Calu3 (cell line): ENCODE measurements at regions of chr3 and their contacts with region 1.

Region 1: GRCh38 chr3:136075218-136075808 is 109.8 kb downstream of the PPP2R3A start:
- DNase-seq: peak; percentile 81
- H3K4me3 Mint-ChIP-seq: no peak overlapping the region
- H3K27ac Mint-ChIP-seq: no peak overlapping the region
- H3K4me1 Mint-ChIP-seq: peaks cover 8% of the 10 kb centered on the region
- H3K27me3 Mint-ChIP-seq: no peaks in the 10 kb centered on the region
- CTCF ChIP-seq: peak; percentile 85

Region 2: GRCh38 chr3:136022529-136023263 is 52.6 kb before region 1 on chr3:
- CTCF ChIA-PET with region 1: no interaction called
- intact Hi-C with region 1: no loop called
- DNase-seq: no peak
- H3K4me3 Mint-ChIP-seq: no peak overlapping the region
- H3K27ac Mint-ChIP-seq: no peak overlapping the region
- H3K4me1 Mint-ChIP-seq: peaks cover 10% of the 10 kb centered on the region
- H3K27me3 Mint-ChIP-seq: no peaks in the 10 kb centered on the region
- CTCF ChIP-seq: no peak

Region 3: DNA sequence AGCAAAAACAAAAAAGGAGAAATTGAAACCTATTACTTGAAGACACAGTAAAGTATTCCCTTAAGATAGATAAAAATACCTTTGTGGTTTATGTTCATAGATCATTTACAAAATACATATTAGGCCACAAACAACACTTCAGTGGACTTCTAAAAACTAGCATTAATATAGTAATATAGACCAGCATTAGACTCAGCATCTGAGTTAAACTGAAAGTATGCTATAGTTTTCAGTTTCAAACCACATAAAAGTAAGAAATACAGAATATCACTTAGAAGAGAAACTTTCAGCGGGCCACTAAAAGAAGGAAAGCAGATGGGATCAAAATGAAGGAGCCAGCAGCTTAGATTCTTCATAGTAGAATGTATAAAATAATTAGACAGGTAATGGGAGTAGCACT is 34.2 kb after region 1 on chr3:
- CTCF ChIA-PET with region 1: no interaction called
- intact Hi-C with region 1: no loop called
- DNase-seq: no peak
- H3K4me3 Mint-ChIP-seq: no peak overlapping the region
- H3K27ac Mint-ChIP-seq: no peak overlapping the region
- H3K4me1 Mint-ChIP-seq: no peaks in the 10 kb centered on the region
- H3K27me3 Mint-ChIP-seq: no peaks in the 10 kb centered on the region
- CTCF ChIP-seq: no peak

Region 4: DNA sequence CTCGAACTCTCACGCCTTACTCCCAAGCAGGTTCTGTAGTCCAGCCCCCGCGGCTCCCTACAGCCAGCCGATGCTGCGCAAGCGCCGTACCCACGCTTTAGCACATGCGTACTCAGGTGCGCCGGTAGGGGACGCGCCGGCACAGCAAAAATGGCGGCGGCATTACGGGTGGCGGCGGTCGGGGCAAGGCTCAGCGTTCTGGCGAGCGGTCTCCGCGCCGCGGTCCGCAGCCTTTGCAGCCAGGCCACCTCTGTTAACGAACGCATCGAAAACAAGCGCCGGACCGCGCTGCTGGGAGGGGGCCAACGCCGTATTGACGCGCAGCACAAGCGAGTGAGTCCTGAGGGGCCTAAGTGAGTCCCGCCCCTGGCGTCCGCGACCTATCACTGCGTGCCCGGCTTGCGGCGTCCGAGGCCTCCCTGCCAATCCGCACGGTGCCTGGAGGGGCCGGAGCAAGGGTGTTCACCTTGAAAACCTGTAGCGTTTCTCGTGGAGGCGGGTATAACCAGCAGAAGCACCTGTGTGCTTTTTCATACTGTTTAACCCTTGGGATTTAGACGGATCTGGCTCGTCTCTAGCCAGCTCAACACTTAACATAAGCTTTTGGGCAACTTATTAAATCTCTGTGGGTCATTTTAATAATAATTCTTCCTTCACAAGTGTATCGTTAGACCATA is 175.1 kb after region 1 on chr3 and contains the start of gene PCCB:
- CTCF ChIA-PET with region 1: interaction called, 4 read pairs
- intact Hi-C with region 1: loop called (anchors 1 kb)
- DNase-seq: peak; percentile 99
- H3K4me3 Mint-ChIP-seq: peak within 1 kb of the TSS; percentile 89
- H3K27ac Mint-ChIP-seq: peak within 1 kb of the TSS; percentile 96
- H3K4me1 Mint-ChIP-seq: peaks cover 26% of the 10 kb centered on the region
- H3K27me3 Mint-ChIP-seq: no peaks in the 10 kb centered on the region
- CTCF ChIP-seq: peak; percentile 94
- total RNA-seq, gene PCCB: 52.3 and 63.5 TPM in 2 replicates

Region 5: GRCh38 chr3:136305878-136306277 is 230.6 kb after region 1 on chr3:
- CTCF ChIA-PET with region 1: no interaction called
- intact Hi-C with region 1: loop called (anchors 5 kb)
- DNase-seq: peak; percentile 33
- H3K4me3 Mint-ChIP-seq: no peak overlapping the region
- H3K27ac Mint-ChIP-seq: no peak overlapping the region
- H3K4me1 Mint-ChIP-seq: no peaks in the 10 kb centered on the region
- H3K27me3 Mint-ChIP-seq: no peaks in the 10 kb centered on the region
- CTCF ChIP-seq: peak; percentile 65

Region 6: GRCh38 chr3:136390574-136390973 is 315.3 kb after region 1 on chr3:
- CTCF ChIA-PET with region 1: interaction called, 13 read pairs
- intact Hi-C with region 1: loop called (anchors 2 kb)
- DNase-seq: no peak
- H3K4me3 Mint-ChIP-seq: no peak overlapping the region
- H3K27ac Mint-ChIP-seq: no peak overlapping the region
- H3K4me1 Mint-ChIP-seq: no peaks in the 10 kb centered on the region
- H3K27me3 Mint-ChIP-seq: no peaks in the 10 kb centered on the region
- CTCF ChIP-seq: no peak

Region 7: DNA sequence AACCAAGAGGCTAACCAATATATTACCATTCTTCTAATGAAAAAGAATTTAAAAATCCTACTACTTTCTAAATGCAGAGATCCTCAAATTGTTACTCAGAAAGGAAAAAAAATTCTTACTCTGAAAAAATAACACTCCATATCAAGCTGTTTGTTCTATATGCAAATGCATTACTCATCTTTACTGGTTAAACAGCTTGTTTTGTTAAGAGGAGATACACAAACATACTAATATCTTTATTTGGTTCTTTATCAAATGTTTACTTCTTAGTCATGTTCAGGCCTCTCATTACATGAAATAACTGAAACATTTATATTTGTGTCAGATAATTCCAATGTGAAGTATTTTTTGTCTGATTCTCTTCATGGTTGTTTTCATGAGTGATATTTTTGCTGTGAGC is 321.6 kb after region 1 on chr3:
- CTCF ChIA-PET with region 1: interaction called, 13 read pairs
- intact Hi-C with region 1: no loop called
- DNase-seq: no peak
- H3K4me3 Mint-ChIP-seq: no peak overlapping the region
- H3K27ac Mint-ChIP-seq: no peak overlapping the region
- H3K4me1 Mint-ChIP-seq: no peaks in the 10 kb centered on the region
- H3K27me3 Mint-ChIP-seq: no peaks in the 10 kb centered on the region
- CTCF ChIP-seq: no peak